Dendritic cell treated with granulocyte-macrophage colony-stimulating factor and Interleukin-4, amounts not matched to agents 40 ng/mL and 50 ng/mL, for 4 days (primary cell): ENCODE measurements at regions of chr13 and their contacts with region 1.

Region 1: GRCh38 chr13:46735425-46735824 is 61.5 kb downstream of the ESD start:
- H3K4me3 Mint-ChIP-seq: no peak overlapping the region
- H3K27ac Mint-ChIP-seq: no peak overlapping the region
- H3K4me1 Mint-ChIP-seq: peaks cover 11% of the 10 kb centered on the region
- H3K27me3 Mint-ChIP-seq: no peaks in the 10 kb centered on the region

Region 2: GRCh38 chr13:46782691-46783090 is 47.3 kb after region 1 on chr13:
- intact Hi-C with region 1: loop called (anchors 2 kb)
- H3K4me3 Mint-ChIP-seq: no peak overlapping the region
- H3K27ac Mint-ChIP-seq: no peak overlapping the region
- H3K4me1 Mint-ChIP-seq: peaks cover under 1% of the 10 kb centered on the region
- H3K27me3 Mint-ChIP-seq: no peaks in the 10 kb centered on the region

Region 3: GRCh38 chr13:47650209-47650608 is 914.8 kb after region 1 on chr13:
- intact Hi-C with region 1: no loop called
- H3K4me3 Mint-ChIP-seq: no peak overlapping the region
- H3K27ac Mint-ChIP-seq: no peak overlapping the region
- H3K4me1 Mint-ChIP-seq: peaks cover 4% of the 10 kb centered on the region
- H3K27me3 Mint-ChIP-seq: no peaks in the 10 kb centered on the region